Naive thymus-derived CD4-positive, alpha-beta T cell (primary cell): ENCODE measurements at regions of chr19 and their contacts with region 1.

Region 1: DNA sequence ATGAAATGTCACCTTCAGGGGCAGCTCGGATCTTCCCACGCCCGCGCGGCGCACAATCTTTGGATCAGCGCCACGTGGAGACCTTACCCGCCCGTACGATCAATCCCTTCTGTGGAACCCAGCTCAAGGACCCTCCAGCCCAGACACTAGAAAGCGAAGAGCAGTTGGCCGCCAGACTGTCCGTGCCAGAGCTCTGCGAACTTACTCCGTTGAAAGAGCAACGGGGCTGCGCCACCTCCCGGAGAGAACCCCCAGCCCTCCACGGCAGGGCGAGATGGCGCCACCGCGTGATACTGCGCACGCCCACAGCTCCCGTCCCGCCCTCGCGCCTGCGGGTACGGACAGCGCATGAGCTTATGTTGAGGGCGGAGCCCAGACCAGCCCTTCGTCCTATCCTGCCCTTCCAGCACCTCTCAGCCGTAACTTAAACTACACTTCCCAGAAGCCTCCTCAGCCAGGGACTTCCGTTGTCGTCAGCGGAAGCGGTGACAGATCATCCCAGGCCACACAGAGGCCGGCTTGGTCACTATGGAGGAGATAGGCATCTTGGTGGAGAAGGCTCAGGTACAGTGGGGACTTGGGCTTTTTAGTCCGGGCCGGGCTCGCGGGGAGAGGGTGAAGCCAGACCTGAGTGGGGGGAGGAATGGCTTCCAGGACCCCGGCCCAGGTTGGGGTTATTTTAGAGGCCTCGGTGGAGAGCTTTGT is at the start of gene PSMC4:
- DNase-seq: peak; percentile 94 to 99 (median 98)
- ATAC-seq: peak; percentile 98
- H3K4me3 ChIP-seq: peak within 1 kb of the TSS; percentile 88
- H3K4me3 Mint-ChIP-seq: peak within 1 kb of the TSS; percentile 92 to 100 (median 94)
- H3K27ac ChIP-seq: peak within 1 kb of the TSS; percentile 95
- H3K27ac Mint-ChIP-seq: peak within 1 kb of the TSS; percentile 95 to 99 (median 97)
- H3K4me1 ChIP-seq: peaks cover 27 to 32% of the 10 kb centered on the region in 2 donors
- H3K4me1 Mint-ChIP-seq: peaks cover 39 to 61% (median 53%) of the 10 kb centered on the region in 7 donors
- H3K27me3 ChIP-seq: no peaks in the 10 kb centered on the region
- H3K27me3 Mint-ChIP-seq: no peaks in the 10 kb centered on the region
- total RNA-seq, gene PSMC4: 48.7 to 146 (median 69.1) TPM

Region 2: DNA sequence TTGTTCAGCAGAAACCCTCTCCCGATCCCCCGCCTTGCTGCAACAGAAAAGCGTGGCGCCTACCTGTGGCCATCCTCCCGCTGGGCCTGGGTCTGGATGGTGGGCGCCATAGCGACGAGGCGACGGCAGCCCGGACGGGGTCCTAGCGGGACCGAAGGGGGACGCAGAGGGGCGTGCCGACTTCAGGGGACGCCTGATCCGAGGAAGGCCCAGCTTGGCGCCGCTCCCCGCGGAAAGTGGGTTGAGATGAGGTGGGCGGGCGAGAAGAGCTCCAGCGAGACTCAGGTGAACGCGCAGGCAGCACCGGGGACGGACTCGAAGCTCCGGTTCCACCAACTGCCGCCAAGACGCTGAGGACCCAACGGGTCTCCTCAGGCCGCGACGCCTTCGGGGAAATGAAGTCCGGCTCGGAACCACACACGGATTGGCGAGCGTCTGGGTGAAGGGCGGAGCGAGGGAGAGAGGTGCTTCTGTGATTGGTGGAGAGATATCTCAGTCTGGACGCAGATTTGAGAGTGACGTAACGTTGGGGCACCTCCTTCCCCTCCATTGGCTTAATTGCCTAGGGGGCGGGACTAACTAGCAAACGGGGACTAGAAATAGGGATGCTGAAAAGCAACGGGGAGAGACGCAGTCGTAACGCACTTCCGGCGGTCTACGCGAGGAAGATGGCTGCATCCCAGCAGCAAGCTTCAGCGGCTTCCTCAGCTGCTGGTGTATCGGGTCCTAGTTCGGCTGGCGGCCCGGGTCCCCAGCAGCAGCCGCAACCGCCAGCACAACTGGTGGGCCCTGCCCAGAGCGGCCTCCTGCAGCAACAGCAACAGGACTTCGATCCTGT is 579.9 kb before region 1 on chr19 and contains the starts of genes MED29 and PAF1:
- CTCF ChIA-PET with region 1: no interaction called
- POLR2A ChIA-PET with region 1: no interaction called
- intact Hi-C with region 1: loop called in 1 of 2 experiments (anchors 1 kb)
- DNase-seq: peak; percentile 76 to 99 (median 99)
- ATAC-seq: peak; percentile 95
- H3K4me3 ChIP-seq: peak within 1 kb of the TSS; percentile 84
- H3K4me3 Mint-ChIP-seq: peak within 1 kb of the TSS; percentile 89 to 99 (median 96)
- H3K27ac ChIP-seq: peak within 1 kb of the TSS; percentile 95
- H3K27ac Mint-ChIP-seq: peak within 1 kb of the TSS; percentile 95 to 100 (median 99)
- H3K4me1 ChIP-seq: peaks cover 16% of the 10 kb centered on the region in 2 donors
- H3K4me1 Mint-ChIP-seq: peaks cover 21 to 54% (median 38%) of the 10 kb centered on the region in 7 donors
- H3K27me3 ChIP-seq: no peaks in the 10 kb centered on the region
- H3K27me3 Mint-ChIP-seq: no peaks in the 10 kb centered on the region
- total RNA-seq, gene MED29: 44.2 to 57.2 (median 49.4) TPM
- total RNA-seq, gene PAF1: 42.8 to 104 (median 55.5) TPM

Region 3: GRCh38 chr19:39833464-39834286 is 137.2 kb before region 1 on chr19 and contains the start of gene DYRK1B:
- CTCF ChIA-PET with region 1: interaction called, 3 read pairs
- POLR2A ChIA-PET with region 1: interaction called, 8 read pairs
- intact Hi-C with region 1: loop called (anchors 1 to 5 kb)
- DNase-seq: peak; percentile 90 to 99 (median 98)
- ATAC-seq: peak; percentile 92
- H3K4me3 ChIP-seq: peak within 1 kb of the TSS; percentile 100
- H3K4me3 Mint-ChIP-seq: peak within 1 kb of the TSS; percentile 60 to 88 (median 81)
- H3K27ac ChIP-seq: peak within 1 kb of the TSS; percentile 96
- H3K27ac Mint-ChIP-seq: peak within 1 kb of the TSS; percentile 85 to 96 (median 92)
- H3K4me1 ChIP-seq: peaks cover 17 to 23% of the 10 kb centered on the region in 2 donors
- H3K4me1 Mint-ChIP-seq: peaks cover 19 to 37% (median 27%) of the 10 kb centered on the region in 7 donors
- H3K27me3 ChIP-seq: no peaks in the 10 kb centered on the region
- H3K27me3 Mint-ChIP-seq: no peaks in the 10 kb centered on the region
- total RNA-seq, gene DYRK1B: 12.3 to 38.9 (median 23.5) TPM

Region 4: GRCh38 chr19:39906820-39907611 is 63.8 kb before region 1 on chr19:
- CTCF ChIA-PET with region 1: interaction called, 8 read pairs
- POLR2A ChIA-PET with region 1: interaction called, 14 read pairs
- intact Hi-C with region 1: loop called in 1 of 2 experiments (anchors 5 kb)
- DNase-seq: no peak
- ATAC-seq: no peak
- H3K4me3 ChIP-seq: no peak overlapping the region
- H3K4me3 Mint-ChIP-seq: peak overlapping the region in 1 of 10 donors; percentile 4
- H3K27ac ChIP-seq: no peak overlapping the region
- H3K27ac Mint-ChIP-seq: peak overlapping the region in 3 of 9 donors; percentile 2 to 47 (median 18)
- H3K4me1 ChIP-seq: no peaks in the 10 kb centered on the region
- H3K4me1 Mint-ChIP-seq: peaks cover 5 to 25% (median 22%) of the 10 kb centered on the region in 7 donors
- H3K27me3 ChIP-seq: no peaks in the 10 kb centered on the region
- H3K27me3 Mint-ChIP-seq: no peaks in the 10 kb centered on the region

Region 5: DNA sequence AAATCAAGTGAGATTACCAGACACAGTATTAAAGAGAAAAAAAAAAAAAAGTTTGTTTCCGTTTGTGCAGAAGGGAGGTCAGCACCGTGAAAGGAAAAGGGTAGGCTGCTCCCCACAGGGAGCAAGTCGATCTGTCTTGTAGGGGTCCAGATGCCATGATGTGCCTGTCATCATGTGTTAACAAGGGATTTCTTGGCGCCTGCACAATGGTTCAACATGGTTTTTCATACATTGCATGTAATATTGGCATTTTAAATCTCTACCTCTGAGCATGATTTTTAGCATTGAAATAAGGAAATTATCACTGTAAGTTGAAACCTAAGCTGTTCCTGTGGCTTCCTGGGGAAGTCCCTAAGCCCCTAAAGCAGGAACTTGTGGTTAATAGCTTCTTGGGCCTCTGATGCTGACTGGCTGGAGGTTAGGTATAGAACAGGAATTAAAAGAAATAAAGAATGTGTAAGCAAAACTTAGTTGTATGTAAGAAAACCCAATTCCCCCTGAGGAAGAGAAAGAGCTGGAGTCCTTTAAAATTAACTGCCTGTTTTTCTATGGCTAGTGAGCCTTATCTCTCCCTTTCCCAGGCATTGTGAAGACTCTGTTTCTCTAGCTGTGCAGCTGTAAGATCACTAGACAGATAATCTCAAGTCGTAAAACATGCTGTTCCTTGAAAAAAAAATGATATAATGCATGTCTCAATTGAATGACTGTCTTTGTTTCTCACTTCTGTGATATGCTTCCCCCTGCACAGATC is 29.0 kb before region 1 on chr19:
- CTCF ChIA-PET with region 1: interaction called, 54 read pairs
- POLR2A ChIA-PET with region 1: interaction called, 91 read pairs
- intact Hi-C with region 1: loop called (anchors 1 kb)
- DNase-seq: peak in 8 of 9 donors; percentile 33 to 85 (median 78)
- ATAC-seq: peak; percentile 91
- H3K4me3 ChIP-seq: peak overlapping the region; percentile 49
- H3K4me3 Mint-ChIP-seq: peak overlapping the region; percentile 74 to 85 (median 78)
- H3K27ac ChIP-seq: peak overlapping the region; percentile 77
- H3K27ac Mint-ChIP-seq: peak overlapping the region; percentile 72 to 93 (median 87)
- H3K4me1 ChIP-seq: peaks cover 56 to 62% of the 10 kb centered on the region in 2 donors
- H3K4me1 Mint-ChIP-seq: peaks cover 62 to 95% (median 77%) of the 10 kb centered on the region in 7 donors
- H3K27me3 ChIP-seq: no peaks in the 10 kb centered on the region
- H3K27me3 Mint-ChIP-seq: no peaks in the 10 kb centered on the region

Region 6: GRCh38 chr19:40055832-40056504 is 85.1 kb after region 1 on chr19 and contains the start of gene ZNF780B:
- CTCF ChIA-PET with region 1: no interaction called
- POLR2A ChIA-PET with region 1: interaction called, 6 read pairs
- intact Hi-C with region 1: loop called in 1 of 2 experiments (anchors 1 kb)
- DNase-seq: peak; percentile 33 to 79 (median 76)
- ATAC-seq: peak; percentile 94
- H3K4me3 ChIP-seq: peak within 1 kb of the TSS; percentile 81
- H3K4me3 Mint-ChIP-seq: peak within 1 kb of the TSS; percentile 97 to 100 (median 99)
- H3K27ac ChIP-seq: peak within 1 kb of the TSS; percentile 89
- H3K27ac Mint-ChIP-seq: peak within 1 kb of the TSS; percentile 89 to 99 (median 96)
- H3K4me1 ChIP-seq: peaks cover 12% of the 10 kb centered on the region in 2 donors
- H3K4me1 Mint-ChIP-seq: peaks cover 31 to 62% (median 54%) of the 10 kb centered on the region in 7 donors
- H3K27me3 ChIP-seq: no peaks in the 10 kb centered on the region
- H3K27me3 Mint-ChIP-seq: peaks cover 0 to 14% (median 6%) of the 10 kb centered on the region in 5 donors
- total RNA-seq, gene ZNF780B: 22.7 to 85.2 (median 35.2) TPM

Region 7: GRCh38 chr19:40221858-40222837 is 251.3 kb after region 1 on chr19:
- CTCF ChIA-PET with region 1: no interaction called
- POLR2A ChIA-PET with region 1: no interaction called
- intact Hi-C with region 1: loop called in 1 of 2 experiments (anchors 10 kb)
- DNase-seq: peak; percentile 54 to 86 (median 82)
- ATAC-seq: peak; percentile 92
- H3K4me3 ChIP-seq: no peak overlapping the region
- H3K4me3 Mint-ChIP-seq: peak overlapping the region; percentile 16 to 85 (median 68)
- H3K27ac ChIP-seq: no peak overlapping the region
- H3K27ac Mint-ChIP-seq: peak overlapping the region; percentile 5 to 85 (median 58)
- H3K4me1 ChIP-seq: peaks cover 4 to 20% of the 10 kb centered on the region in 2 donors
- H3K4me1 Mint-ChIP-seq: peaks cover 12 to 30% (median 24%) of the 10 kb centered on the region in 7 donors
- H3K27me3 ChIP-seq: peaks cover 16 to 35% of the 10 kb centered on the region in 2 donors
- H3K27me3 Mint-ChIP-seq: peaks cover 49 to 70% (median 60%) of the 10 kb centered on the region in 5 donors